Ovary (tissue), 10 donors: ENCODE measurements at regions of chr22 and their contacts with region 1.

Region 1: DNA sequence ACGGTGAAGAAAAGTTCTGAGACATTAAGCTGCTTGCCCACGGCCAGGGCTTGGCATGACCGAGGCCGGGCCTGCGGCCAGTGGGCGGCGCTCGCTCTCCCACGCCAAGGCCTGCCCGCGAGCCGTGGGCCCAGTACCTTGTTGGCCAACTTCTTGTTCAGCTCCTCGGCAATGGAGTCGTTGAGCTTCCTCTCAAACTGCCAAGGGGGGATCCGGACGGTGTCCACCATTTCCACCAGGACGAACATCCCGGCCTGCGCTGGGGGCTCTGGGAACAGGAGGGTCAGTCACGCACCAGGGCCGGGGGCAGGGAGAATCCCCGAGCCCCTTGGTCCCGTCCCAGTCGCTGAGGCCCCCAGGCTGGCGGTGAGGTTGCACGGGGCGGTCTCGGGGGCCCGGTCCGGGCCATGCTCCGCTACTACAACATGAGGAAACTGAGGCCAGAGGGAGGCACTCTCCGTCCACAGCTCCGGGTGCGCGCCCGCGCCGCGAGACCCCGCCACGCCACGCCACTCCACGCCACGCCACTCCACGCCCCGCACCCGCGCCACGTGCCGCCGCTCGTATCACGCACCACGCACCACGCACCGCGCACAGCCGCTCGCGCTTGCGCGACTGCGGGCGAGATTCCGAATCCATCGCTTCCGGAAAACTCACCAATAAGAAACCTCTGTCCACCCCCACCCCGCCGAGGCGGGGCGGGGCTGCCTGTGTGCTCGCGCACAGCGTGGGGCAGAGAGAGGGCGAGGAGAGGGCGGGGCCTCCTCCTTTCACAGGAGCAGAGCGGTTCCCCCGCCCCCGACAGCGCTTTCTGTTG is at the start of gene POLR3H:
- DNase-seq: peak; percentile 98 to 99 (median 99)
- H3K4me3 ChIP-seq: peak within 1 kb of the TSS; percentile 83
- H3K27ac ChIP-seq: peak within 1 kb of the TSS; percentile 65 to 76
- H3K4me1 ChIP-seq: peaks cover 5% of the 10 kb centered on the region
- H3K27me3 ChIP-seq: no peaks in the 10 kb centered on the region
- CTCF ChIP-seq: peak; percentile 56 to 65 (median 64)
- EP300 ChIP-seq: no peak
- POLR2A ChIP-seq: peak; percentile 58
- total RNA-seq, gene POLR3H: 17.2 to 84.6 (median 52.9) TPM

Region 2: DNA sequence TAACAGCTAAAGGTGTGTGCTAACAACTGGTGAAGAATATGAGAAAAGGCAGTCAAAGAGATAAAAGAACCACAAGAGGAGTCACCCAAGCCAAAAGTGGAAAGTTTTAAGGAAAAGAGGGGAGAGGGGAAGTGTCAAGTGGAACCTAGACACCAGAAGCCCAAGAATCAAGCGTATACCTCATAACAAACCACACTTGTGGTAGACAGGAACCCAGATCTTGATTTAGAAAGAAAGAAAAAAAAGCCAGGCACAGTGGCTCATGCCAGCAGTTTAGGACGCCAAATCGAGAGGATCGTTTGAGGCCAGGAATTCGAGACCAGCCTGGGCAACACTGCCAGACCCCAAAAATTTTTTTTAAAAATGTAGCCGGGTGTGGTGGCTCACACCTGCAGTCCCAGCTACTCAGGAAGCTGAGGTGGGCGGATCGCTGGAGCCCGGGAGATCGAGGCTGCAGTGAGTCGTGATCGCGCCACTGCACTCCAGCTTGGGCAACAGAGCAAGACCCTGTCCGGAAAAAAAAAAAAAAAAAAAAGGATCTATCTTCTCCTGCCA is 725.8 kb before region 1 on chr22:
- intact Hi-C with region 1: no loop called
- DNase-seq: no peak
- H3K4me3 ChIP-seq: peak overlapping the region; percentile 81
- H3K27ac ChIP-seq: peak overlapping the region; percentile 23 to 50
- H3K4me1 ChIP-seq: peaks cover 9% of the 10 kb centered on the region
- H3K27me3 ChIP-seq: no peaks in the 10 kb centered on the region
- CTCF ChIP-seq: no peak
- EP300 ChIP-seq: no peak
- POLR2A ChIP-seq: no peak

Region 3: DNA sequence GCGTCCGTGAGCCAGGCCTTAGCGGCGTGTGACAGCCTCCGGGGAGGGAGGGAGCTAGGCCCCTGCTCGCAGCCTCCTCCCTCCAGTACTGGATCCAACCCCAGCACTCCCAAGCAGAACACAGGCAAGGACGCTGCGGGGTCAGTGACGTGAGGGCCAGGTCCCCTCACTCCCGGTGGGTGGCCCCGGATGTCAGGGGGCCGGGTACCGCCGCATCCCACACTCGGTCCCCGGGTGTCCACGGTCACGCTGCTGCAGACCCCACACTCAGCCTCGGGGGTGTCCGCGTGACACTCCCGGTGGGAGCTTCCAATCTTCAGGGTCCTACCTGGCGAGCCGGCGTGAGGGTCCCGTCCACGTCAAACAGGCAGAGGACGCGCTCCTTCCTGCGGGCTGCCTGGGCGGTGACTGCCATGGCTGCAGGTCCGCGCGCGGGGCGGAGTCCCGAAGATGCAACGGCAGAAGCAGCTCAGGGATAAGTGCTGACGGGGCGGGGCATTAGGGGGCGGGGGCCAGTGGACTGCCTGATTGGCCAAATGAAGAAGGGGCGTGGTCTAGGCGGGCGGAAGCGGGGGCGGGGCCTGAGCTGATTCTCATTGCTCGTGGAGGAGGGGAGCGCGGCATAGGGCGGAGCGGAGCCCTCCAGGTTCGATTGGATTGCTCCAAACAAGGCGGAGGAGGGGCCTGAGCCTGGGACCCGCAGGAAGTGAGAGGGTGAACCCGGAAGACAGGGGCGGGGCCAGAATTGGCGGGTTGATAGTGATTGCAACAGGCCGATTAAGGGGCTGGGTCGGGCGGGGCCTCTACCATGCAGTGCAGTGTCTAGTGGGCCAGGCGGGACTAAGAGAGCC is 45.6 kb after region 1 on chr22 and contains the start of gene PMM1:
- intact Hi-C with region 1: loop called in 1 of 4 experiments (anchors 10 kb)
- DNase-seq: peak; percentile 100
- H3K4me3 ChIP-seq: peak within 1 kb of the TSS; percentile 87
- H3K27ac ChIP-seq: peak within 1 kb of the TSS; percentile 47 to 58
- H3K4me1 ChIP-seq: peaks cover 4% of the 10 kb centered on the region
- H3K27me3 ChIP-seq: no peaks in the 10 kb centered on the region
- CTCF ChIP-seq: no peak
- EP300 ChIP-seq: no peak
- POLR2A ChIP-seq: peak; percentile 94
- total RNA-seq, gene PMM1: 40.5 to 68.6 (median 55.7) TPM

Region 4: GRCh38 chr22:41596776-41597634 is 52.9 kb after region 1 on chr22:
- intact Hi-C with region 1: loop called in 3 of 4 experiments (anchors 5 to 10 kb)
- DNase-seq: peak; percentile 69 to 82 (median 76)
- H3K4me3 ChIP-seq: no peak overlapping the region
- H3K27ac ChIP-seq: peak overlapping the region; percentile 62 to 65
- H3K4me1 ChIP-seq: peaks cover 18% of the 10 kb centered on the region
- H3K27me3 ChIP-seq: no peaks in the 10 kb centered on the region
- CTCF ChIP-seq: peak; percentile 69 to 90 (median 82)
- EP300 ChIP-seq: no peak
- POLR2A ChIP-seq: no peak